WTC11 (cell line): ENCODE measurements at regions of chr4 and their contacts with region 1.

Region 1: GRCh38 chr4:67909905-67910584 is 26.2 kb upstream of the TMPRSS11D start:
- DNase-seq: no peak
- ATAC-seq: no peak
- H3K4me3 Mint-ChIP-seq: no peak overlapping the region
- H3K27ac Mint-ChIP-seq: no peak overlapping the region
- H3K4me1 Mint-ChIP-seq: no peaks in the 10 kb centered on the region
- H3K27me3 Mint-ChIP-seq: no peaks in the 10 kb centered on the region
- CTCF ChIP-seq: peak; percentile 80

Region 2: DNA sequence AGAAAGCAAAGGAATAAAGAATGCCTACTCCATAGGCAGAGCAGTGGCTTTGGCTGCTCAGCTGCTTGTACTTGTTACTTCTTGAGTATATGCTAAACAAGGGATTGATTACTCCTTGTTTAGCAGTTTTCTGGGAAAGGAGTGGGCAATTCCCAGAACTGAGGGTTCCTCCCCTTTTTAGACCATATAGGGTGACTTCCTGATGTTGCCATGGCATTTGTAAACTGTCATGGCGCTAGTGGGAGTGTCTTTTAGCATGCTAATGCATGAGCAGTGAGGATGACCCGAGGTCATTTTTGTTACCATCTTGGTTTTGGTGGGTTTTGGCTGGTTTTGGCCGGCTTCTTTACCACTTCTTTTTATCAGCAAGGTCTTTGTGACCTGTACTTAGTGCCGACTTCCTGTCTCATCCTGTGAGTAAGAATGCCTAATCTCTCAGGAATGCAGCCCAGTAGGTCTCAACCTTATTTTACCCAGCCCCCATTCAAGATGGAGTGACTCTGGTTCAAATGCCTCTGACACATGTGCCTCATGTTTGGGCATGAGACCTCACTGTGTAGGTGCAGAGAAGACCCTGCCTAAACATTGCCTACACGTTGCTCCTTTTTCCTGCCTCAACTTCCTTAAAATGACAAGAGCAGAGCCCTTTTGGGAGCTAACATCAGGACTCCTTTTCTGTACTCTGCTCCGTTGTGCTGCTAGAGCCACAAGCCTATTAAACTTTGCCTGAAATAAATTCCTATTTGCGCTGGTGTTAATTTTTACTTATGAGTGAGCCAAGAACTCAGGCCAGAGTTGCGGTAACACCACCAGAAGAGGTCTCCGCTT is 188.1 kb before region 1 on chr4:
- CTCF ChIA-PET with region 1: interaction called, 11 read pairs
- POLR2A ChIA-PET with region 1: no interaction called
- DNase-seq: peak; percentile 36
- ATAC-seq: peak; percentile 64
- H3K4me3 Mint-ChIP-seq: no peak overlapping the region
- H3K27ac Mint-ChIP-seq: peak overlapping the region; percentile 88
- H3K4me1 Mint-ChIP-seq: peaks cover 26% of the 10 kb centered on the region
- H3K27me3 Mint-ChIP-seq: no peaks in the 10 kb centered on the region
- CTCF ChIP-seq: no peak

Region 3: GRCh38 chr4:67892905-67893304 is 17.1 kb before region 1 on chr4:
- CTCF ChIA-PET with region 1: interaction called, 17 read pairs
- POLR2A ChIA-PET with region 1: no interaction called
- DNase-seq: peak; percentile 26
- ATAC-seq: peak; percentile 98
- H3K4me3 Mint-ChIP-seq: no peak overlapping the region
- H3K27ac Mint-ChIP-seq: no peak overlapping the region
- H3K4me1 Mint-ChIP-seq: peaks cover 7% of the 10 kb centered on the region
- H3K27me3 Mint-ChIP-seq: no peaks in the 10 kb centered on the region
- CTCF ChIP-seq: no peak